Mammary epithelial cell (primary cell): ENCODE measurements at regions of chr6 and their contacts with region 1.

Region 1: GRCh38 chr6:40328405-40328987 is 258.7 kb downstream of the LRFN2 start:
- DNase-seq: peak; percentile 52
- H3K4me3 ChIP-seq: no peak overlapping the region
- H3K27ac ChIP-seq: no peak overlapping the region
- H3K4me1 ChIP-seq: no peaks in the 10 kb centered on the region
- H3K27me3 ChIP-seq: peaks cover 2% of the 10 kb centered on the region
- CTCF ChIP-seq: peak; percentile 94 to 96

Region 2: DNA sequence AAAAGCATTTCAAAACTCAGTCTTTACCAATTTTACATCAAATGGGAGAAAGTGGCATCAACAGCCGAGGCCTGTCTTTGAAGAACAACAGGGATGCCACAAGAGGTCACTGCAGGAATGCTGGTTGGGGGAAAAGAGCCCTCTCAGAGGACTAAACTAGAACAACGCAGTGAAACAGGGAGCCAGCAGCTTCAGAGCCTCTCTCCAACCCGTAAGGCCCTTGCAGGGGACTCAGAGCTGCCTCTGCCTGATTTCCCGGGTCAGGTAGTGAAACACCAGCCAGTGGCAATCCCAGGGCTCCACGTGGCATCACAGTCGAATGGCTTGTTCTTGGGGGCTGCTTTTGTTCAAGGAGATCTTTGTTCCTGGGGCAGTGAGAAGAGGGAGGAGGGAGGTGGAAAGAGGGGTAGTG is 951.0 kb before region 1 on chr6:
- CTCF ChIA-PET with region 1: no interaction called
- dilution Hi-C with region 1: no loop called
- in situ Hi-C with region 1: loop called in 1 of 2 experiments (anchors 25 kb)
- intact Hi-C with region 1: loop called (anchors 1 kb)
- DNase-seq: peak; percentile 42
- H3K4me3 ChIP-seq: no peak overlapping the region
- H3K27ac ChIP-seq: no peak overlapping the region
- H3K4me1 ChIP-seq: no peaks in the 10 kb centered on the region
- H3K27me3 ChIP-seq: no peaks in the 10 kb centered on the region
- CTCF ChIP-seq: peak; percentile 74 to 90

Region 3: GRCh38 chr6:40550202-40551101 is 222.0 kb after region 1 on chr6:
- CTCF ChIA-PET with region 1: no interaction called
- dilution Hi-C with region 1: loop called (anchors 10 kb)
- in situ Hi-C with region 1: no loop called
- intact Hi-C with region 1: loop called (anchors 10 kb)
- DNase-seq: peak; percentile 19
- H3K4me3 ChIP-seq: no peak overlapping the region
- H3K27ac ChIP-seq: no peak overlapping the region
- H3K4me1 ChIP-seq: no peaks in the 10 kb centered on the region
- H3K27me3 ChIP-seq: no peaks in the 10 kb centered on the region
- CTCF ChIP-seq: peak; percentile 72 to 77

Region 4: GRCh38 chr6:40587240-40588069 is 259.0 kb after region 1 on chr6 and contains the start of gene LRFN2:
- CTCF ChIA-PET with region 1: no interaction called
- dilution Hi-C with region 1: no loop called
- in situ Hi-C with region 1: loop called (anchors 10 to 25 kb)
- intact Hi-C with region 1: loop called (anchors 1 kb)
- DNase-seq: peak; percentile 70
- H3K4me3 ChIP-seq: peak within 1 kb of the TSS in 2 of 3 experiments; percentile 46 to 48
- H3K27ac ChIP-seq: no peak within 1 kb of the TSS
- H3K4me1 ChIP-seq: peaks cover 9% of the 10 kb centered on the region
- H3K27me3 ChIP-seq: peaks cover 8% of the 10 kb centered on the region
- CTCF ChIP-seq: peak; percentile 47 to 65
- total RNA-seq, gene LRFN2: not detected

Region 5: DNA sequence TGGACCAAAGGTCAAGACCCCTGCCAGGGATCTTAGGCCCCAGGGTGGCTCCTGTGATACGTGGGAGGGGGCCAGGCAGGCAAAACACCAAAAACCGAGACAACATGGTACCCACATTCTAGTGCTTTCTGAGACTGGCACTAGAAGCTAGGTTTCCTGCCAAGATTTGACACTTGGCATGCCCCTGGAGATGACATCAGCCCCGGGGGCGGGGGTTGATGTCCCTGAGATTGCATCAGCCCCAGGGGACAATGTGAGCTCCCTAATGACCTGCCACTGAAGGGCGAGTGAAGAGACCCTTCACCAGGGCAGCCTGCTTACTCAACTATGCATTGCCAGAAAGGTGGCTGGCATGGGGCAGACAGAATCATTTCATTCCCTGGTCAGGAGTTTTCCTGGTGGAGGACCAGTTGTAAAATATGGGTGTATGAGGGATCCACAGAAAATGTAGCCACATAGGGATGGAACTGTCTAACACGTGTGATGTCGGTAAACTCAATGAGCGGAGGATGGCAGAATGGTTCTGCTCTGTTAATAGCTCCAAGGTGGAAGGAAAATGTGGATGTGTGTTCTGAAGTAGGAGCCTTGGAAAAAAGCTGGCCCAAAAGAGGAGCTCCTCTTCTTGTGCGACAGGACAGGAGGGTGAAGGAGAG is 490.8 kb after region 1 on chr6:
- CTCF ChIA-PET with region 1: no interaction called
- dilution Hi-C with region 1: no loop called
- in situ Hi-C with region 1: loop called in 1 of 2 experiments (anchors 10 kb)
- intact Hi-C with region 1: loop called (anchors 1 kb)
- DNase-seq: no peak
- H3K4me3 ChIP-seq: no peak overlapping the region
- H3K27ac ChIP-seq: no peak overlapping the region
- H3K4me1 ChIP-seq: no peaks in the 10 kb centered on the region
- H3K27me3 ChIP-seq: no peaks in the 10 kb centered on the region
- CTCF ChIP-seq: no peak

Region 6: GRCh38 chr6:40912158-40912946 is 583.9 kb after region 1 on chr6:
- CTCF ChIA-PET with region 1: no interaction called
- dilution Hi-C with region 1: no loop called
- in situ Hi-C with region 1: no loop called
- intact Hi-C with region 1: loop called (anchors 1 kb)
- DNase-seq: peak; percentile 87
- H3K4me3 ChIP-seq: no peak overlapping the region
- H3K27ac ChIP-seq: no peak overlapping the region
- H3K4me1 ChIP-seq: peaks cover 20% of the 10 kb centered on the region
- H3K27me3 ChIP-seq: no peaks in the 10 kb centered on the region
- CTCF ChIP-seq: peak; percentile 59 to 75

Region 7: GRCh38 chr6:41066867-41067304 is 738.4 kb after region 1 on chr6:
- CTCF ChIA-PET with region 1: no interaction called
- dilution Hi-C with region 1: no loop called
- in situ Hi-C with region 1: no loop called
- intact Hi-C with region 1: loop called (anchors 5 kb)
- DNase-seq: peak; percentile 43
- H3K4me3 ChIP-seq: no peak overlapping the region
- H3K27ac ChIP-seq: no peak overlapping the region
- H3K4me1 ChIP-seq: peaks cover 11% of the 10 kb centered on the region
- H3K27me3 ChIP-seq: no peaks in the 10 kb centered on the region
- CTCF ChIP-seq: peak; percentile 76 to 82